ENCODE measurements at regions of chr14 and their contacts with region 1.

Region 1: GRCh38 chr14:51283402-51284085 is 43.5 kb downstream of the TMX1 start:
- DNase-seq: no peak
- H3K4me3 Mint-ChIP-seq: no peak overlapping the region
- H3K27ac Mint-ChIP-seq: no peak overlapping the region
- H3K4me1 Mint-ChIP-seq: no peaks in the 10 kb centered on the region
- H3K27me3 Mint-ChIP-seq: no peaks in the 10 kb centered on the region

Region 2: GRCh38 chr14:51360592-51360991 is 77.0 kb after region 1 on chr14:
- CTCF ChIA-PET with region 1: no interaction called
- intact Hi-C with region 1: loop called (anchors 5 kb)
- DNase-seq: no peak
- H3K4me3 Mint-ChIP-seq: no peak overlapping the region
- H3K27ac Mint-ChIP-seq: no peak overlapping the region
- H3K4me1 Mint-ChIP-seq: no peaks in the 10 kb centered on the region
- H3K27me3 Mint-ChIP-seq: no peaks in the 10 kb centered on the region

Region 3: DNA sequence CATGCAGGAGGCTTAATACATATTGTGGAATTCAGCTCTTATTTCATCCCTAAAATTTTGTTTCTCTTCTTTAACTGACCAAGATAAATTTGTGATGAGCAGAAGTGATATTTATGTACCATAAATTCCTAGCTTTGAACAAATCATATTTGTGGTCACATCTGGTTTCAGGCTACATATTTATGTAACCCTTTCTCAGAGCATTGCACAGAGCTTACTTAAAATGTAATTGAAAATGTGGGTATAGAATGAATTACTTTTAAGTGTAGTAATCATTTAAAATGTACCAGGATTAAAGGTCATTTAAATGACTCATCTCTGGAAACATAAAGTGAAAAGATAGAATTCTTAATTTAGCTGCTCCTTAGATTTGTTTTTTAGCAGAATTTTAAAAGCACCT is 238.2 kb after region 1 on chr14:
- CTCF ChIA-PET with region 1: no interaction called
- intact Hi-C with region 1: no loop called
- DNase-seq: no peak
- H3K4me3 Mint-ChIP-seq: no peak overlapping the region
- H3K27ac Mint-ChIP-seq: no peak overlapping the region
- H3K4me1 Mint-ChIP-seq: no peaks in the 10 kb centered on the region
- H3K27me3 Mint-ChIP-seq: peaks cover 5% of the 10 kb centered on the region

Region 4: GRCh38 chr14:51750542-51750941 is 467.0 kb after region 1 on chr14:
- CTCF ChIA-PET with region 1: interaction called, 4 read pairs
- intact Hi-C with region 1: loop called (anchors 1 kb)
- DNase-seq: peak; percentile 42
- H3K4me3 Mint-ChIP-seq: no peak overlapping the region
- H3K27ac Mint-ChIP-seq: no peak overlapping the region
- H3K4me1 Mint-ChIP-seq: no peaks in the 10 kb centered on the region
- H3K27me3 Mint-ChIP-seq: no peaks in the 10 kb centered on the region